Activated T-helper 1 cell treated with anti-CD3 and anti-CD28 coated beads, Interleukin-12 subunit alpha, Interleukin-12 subunit beta, Interleukin-2, Interleukin-4 antibody, amounts not matched to agents 30 ng/mL and 10 ng/mL and 1 ng/mL, durations not matched to agents 14 hours and 24 hours and 36 hours (primary cell): ENCODE measurements at regions of chr11 and their contacts with region 1.

Region 1: DNA sequence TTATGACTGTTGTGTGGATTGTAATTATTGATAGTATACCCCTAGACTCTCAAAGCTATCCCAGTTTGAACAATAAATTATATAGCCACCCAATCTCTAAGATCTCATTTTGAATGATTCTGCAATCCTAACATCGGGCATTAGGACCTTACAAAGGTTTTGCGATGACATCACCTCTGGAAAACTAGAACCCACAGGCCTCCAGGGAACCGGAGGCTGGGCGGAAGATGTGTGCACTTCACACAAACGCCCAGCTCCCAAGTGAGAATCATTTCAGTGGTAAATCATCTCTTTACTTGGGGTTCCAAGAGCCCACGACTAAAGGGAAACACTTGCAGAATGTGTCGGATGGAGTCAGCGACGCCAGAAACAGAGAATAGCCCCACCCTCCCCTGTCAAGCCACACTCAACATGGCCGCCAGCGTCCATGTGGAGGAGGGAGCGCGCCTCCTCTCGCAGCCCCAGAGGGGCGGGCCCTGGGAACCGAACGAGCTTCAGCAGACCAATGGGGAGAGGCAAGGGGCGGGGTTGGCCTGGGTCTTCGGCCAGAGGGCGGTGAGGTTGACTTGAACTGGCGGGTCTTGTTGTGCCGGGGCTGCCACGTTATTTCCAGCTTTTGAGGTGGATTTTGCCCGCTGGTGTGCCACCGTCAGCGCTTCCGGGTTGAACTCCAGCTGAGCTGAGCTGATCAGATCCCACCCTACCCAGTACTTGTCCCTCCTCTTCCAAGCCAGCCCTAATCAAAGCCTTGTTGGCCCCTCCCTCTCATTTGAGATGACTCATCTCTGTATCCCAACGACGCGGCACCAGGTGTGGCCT is 8.4 kb upstream of the MRPL48 start:
- DNase-seq: peak; percentile 97
- H3K4me3 Mint-ChIP-seq: peak overlapping the region; percentile 90
- H3K27ac Mint-ChIP-seq: peak overlapping the region; percentile 99
- H3K4me1 Mint-ChIP-seq: peaks cover 10% of the 10 kb centered on the region
- H3K27me3 Mint-ChIP-seq: no peaks in the 10 kb centered on the region

Region 2: DNA sequence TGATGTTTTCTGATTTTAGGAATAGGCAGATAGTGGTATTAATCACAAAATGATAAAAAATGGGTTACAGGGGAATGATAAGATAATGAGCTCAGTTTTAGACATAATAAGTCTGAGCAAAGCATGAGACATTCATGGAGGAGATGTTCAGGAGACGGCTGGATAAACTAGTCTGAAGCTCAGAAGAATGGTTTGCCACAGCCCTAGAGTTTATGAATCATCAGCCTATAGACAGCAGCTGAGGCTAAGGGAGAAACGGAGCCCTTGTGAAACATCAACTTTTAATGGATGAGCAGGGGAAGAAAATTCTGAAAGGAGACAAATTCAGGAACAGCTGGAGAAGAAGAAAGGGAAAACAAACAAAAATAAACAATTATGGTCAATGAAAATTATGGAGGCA is 315.9 kb before region 1 on chr11:
- intact Hi-C with region 1: no loop called
- DNase-seq: no peak
- H3K4me3 Mint-ChIP-seq: no peak overlapping the region
- H3K27ac Mint-ChIP-seq: no peak overlapping the region
- H3K4me1 Mint-ChIP-seq: no peaks in the 10 kb centered on the region
- H3K27me3 Mint-ChIP-seq: no peaks in the 10 kb centered on the region

Region 3: DNA sequence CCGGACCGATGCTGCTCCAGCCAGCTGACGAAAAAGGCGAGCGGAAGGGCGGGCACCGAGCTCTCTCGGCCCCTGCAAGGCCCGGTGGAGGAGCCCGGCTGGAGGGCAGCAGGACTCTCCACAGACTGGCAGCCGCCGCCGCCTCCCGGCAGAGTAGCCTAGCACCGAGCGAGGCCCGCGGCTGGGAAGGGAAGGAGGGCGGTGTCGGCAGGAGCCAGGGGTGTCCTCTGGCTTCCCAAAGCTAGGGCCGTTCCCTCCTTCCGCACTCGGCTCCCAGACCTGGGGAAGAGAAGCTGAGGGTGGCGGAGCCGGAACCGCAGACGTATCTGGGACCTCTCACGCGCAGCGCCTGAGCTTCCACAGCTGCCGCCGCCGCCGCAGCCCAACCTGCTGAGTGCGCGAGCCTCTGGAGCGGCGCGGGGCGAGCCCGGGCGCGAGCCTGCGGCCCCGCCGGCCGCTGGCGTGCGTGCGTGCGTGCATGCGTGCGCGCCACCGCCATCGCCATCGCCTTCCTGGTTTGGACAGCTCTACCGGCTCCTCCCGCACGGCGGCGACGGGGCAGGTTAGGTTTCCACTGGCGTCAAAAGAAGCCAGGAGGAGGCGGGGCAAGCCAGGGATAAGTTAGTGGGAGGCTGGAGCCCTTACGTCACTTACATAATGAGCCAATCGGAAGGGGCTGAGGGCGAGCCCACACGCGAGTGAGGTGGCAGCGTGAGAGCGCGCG is 18.5 kb before region 1 on chr11 and contains the start of gene RAB6A:
- intact Hi-C with region 1: loop called (anchors 1 kb)
- DNase-seq: peak; percentile 100
- H3K4me3 Mint-ChIP-seq: peak within 1 kb of the TSS; percentile 98
- H3K27ac Mint-ChIP-seq: peak within 1 kb of the TSS; percentile 97
- H3K4me1 Mint-ChIP-seq: peaks cover 41% of the 10 kb centered on the region
- H3K27me3 Mint-ChIP-seq: peaks cover 3% of the 10 kb centered on the region
- total RNA-seq, gene RAB6A: 81.9 and 88.0 TPM in 2 replicates